Adrenal gland (tissue), 19 donors: ENCODE measurements at regions of chr3 and their contacts with region 1.

Region 1: GRCh38 chr3:11651900-11652299 is 8.2 kb upstream of the VGLL4 start:
- DNase-seq: no peak
- H3K4me3 ChIP-seq: no peak overlapping the region
- H3K27ac ChIP-seq: no peak overlapping the region
- H3K4me1 ChIP-seq: no peaks in the 10 kb centered on the region
- H3K27me3 ChIP-seq: no peaks in the 10 kb centered on the region
- CTCF ChIP-seq: peak; percentile 50 to 74 (median 65)
- POLR2A ChIP-seq: no peak

Region 2: DNA sequence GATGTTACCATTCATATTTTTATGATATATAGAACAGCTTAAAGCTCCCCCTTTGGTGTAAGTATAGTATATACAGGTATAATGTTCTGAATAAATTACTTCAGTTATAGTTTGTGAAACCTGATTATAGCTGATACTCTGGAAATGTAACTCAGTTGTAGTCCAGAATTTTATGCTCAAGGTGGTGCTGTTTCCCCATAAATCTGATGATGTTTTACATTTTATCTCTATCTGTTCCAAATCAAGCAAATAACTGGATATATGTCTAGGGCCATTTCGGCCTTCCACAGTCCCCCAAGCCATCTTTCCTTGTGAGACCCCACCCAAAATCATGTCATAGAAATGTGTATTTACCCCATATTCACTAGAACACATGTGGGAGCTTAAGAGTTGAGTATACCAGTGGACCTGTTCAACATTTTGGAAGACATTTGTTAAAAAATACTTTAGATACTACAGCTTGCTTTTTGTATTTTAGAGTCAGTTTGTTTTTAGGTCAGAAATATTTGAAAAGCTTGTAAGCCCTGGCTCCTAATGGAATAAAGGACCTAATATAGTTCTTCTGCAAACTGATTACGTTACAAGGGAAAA is 272.6 kb before region 1 on chr3:
- intact Hi-C with region 1: loop called (anchors 5 kb)
- DNase-seq: peak in 1 of 7 donors; percentile 21
- H3K4me3 ChIP-seq: no peak overlapping the region
- H3K27ac ChIP-seq: peak overlapping the region in 2 of 5 donors; percentile 21 to 24
- H3K4me1 ChIP-seq: peaks cover 0 to 17% of the 10 kb centered on the region in 2 donors
- H3K27me3 ChIP-seq: no peaks in the 10 kb centered on the region
- CTCF ChIP-seq: peak; percentile 36 to 87 (median 73)
- POLR2A ChIP-seq: no peak

Region 3: DNA sequence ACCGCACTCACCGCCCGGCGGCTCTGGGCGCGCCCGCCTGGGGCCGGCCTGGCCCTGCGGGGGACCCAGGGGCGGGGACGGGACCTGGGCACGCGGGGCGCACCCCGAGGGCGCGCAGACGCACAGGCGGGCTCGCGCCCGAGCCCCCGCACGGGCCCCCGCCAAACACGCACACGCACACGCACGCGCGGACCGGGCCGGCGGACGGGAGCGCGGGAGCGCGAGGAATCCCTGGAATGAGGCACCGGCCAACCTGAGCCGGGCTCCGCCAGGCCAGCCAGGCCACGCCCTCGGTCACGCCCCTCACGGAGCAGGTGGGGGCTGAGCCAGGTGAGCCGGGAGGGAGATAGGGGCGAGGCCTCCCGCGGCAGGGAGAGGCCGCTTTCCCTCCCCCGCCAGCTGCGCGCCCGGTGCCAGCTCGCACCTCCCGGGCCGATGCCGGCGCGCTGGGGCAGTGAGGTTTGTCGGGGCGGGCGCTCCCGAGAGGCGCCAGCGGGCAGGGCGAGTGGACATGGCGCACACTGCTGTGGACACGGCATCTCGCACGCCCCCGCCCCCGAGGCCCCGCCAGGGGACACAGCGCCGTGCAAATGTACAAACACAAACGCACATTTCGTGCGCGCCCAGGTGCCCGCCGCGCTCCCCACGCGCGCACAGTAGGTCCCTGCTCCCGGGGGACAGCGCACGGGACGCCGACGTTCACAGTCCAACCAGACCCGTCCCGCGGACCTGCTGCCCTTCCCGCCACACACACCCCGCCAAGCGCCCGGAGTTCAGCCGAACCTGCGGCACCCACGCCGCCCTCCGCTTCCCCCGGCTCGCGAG is 67.7 kb after region 1 on chr3:
- intact Hi-C with region 1: loop called in 1 of 2 experiments (anchors 10 kb)
- DNase-seq: peak; percentile 76 to 87 (median 83)
- H3K4me3 ChIP-seq: peak overlapping the region; percentile 28 to 89 (median 74)
- H3K27ac ChIP-seq: peak overlapping the region in 4 of 5 donors; percentile 85 to 96 (median 90)
- H3K4me1 ChIP-seq: peaks cover 4 to 25% of the 10 kb centered on the region in 2 donors
- H3K27me3 ChIP-seq: no peaks in the 10 kb centered on the region
- CTCF ChIP-seq: peak in 1 of 6 experiments; percentile 3
- POLR2A ChIP-seq: peak in 1 of 2 donors; percentile 44

Region 4: GRCh38 chr3:11803977-11804892 is 152.3 kb after region 1 on chr3:
- intact Hi-C with region 1: loop called (anchors 10 kb)
- DNase-seq: peak; percentile 38 to 70 (median 57)
- H3K4me3 ChIP-seq: no peak overlapping the region
- H3K27ac ChIP-seq: no peak overlapping the region
- H3K4me1 ChIP-seq: no peaks in the 10 kb centered on the region
- H3K27me3 ChIP-seq: no peaks in the 10 kb centered on the region
- CTCF ChIP-seq: peak; percentile 52 to 79 (median 76)
- POLR2A ChIP-seq: no peak

Region 5: GRCh38 chr3:11835028-11835639 is 183.2 kb after region 1 on chr3:
- intact Hi-C with region 1: loop called in 1 of 2 experiments (anchors 10 kb)
- DNase-seq: no peak
- H3K4me3 ChIP-seq: no peak overlapping the region
- H3K27ac ChIP-seq: no peak overlapping the region
- H3K4me1 ChIP-seq: no peaks in the 10 kb centered on the region
- H3K27me3 ChIP-seq: no peaks in the 10 kb centered on the region
- CTCF ChIP-seq: peak; percentile 24 to 57 (median 42)
- POLR2A ChIP-seq: no peak